OCI-LY7 (cell line): ENCODE measurements at regions of chr10 and their contacts with region 1.

Region 1: GRCh38 chr10:104121520-104122224 is at the start of gene SFR1:
- DNase-seq: peak; percentile 99
- H3K4me3 ChIP-seq: peak within 1 kb of the TSS; percentile 74
- H3K27ac ChIP-seq: peak within 1 kb of the TSS; percentile 82
- H3K4me1 ChIP-seq: peaks cover 31% of the 10 kb centered on the region
- CTCF ChIP-seq: peak; percentile 75
- total RNA-seq, gene SFR1: 6.9 and 14.8 TPM in 2 replicates

Region 2: DNA sequence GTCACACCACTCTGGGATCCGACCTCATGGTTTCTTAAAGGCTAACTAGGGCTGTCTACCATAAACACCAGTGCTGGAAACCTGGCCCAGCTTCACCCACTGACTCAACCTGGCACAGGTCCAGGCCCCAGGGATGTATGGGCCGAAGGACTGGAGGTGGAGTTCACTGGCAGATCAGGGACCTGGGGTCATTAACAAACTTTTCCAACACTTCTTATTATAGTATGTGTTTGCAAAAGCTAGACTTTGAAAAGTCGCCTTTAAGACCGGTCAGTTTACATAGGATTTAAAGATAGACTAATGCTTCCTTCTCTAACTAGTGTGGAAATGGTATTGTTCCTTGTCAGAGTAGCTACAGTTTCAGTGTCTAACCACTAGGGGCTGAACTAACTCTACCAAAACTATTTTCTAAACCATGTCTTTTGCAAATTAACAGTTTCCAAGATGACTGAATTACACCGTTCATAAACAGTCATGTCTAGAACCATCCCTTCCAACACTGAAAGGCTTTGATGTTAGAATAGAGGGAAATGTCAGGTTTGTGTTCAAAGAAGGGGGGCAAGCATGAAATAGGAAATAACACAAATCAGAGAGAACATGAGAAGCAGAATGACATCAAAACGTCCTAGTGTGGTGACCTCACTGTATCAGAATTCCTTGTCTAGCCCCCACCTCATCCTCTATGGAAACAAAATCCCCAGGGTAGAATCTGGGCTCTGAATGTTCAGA is 233.4 kb before region 1 on chr10:
- CTCF ChIA-PET with region 1: interaction called, 3 read pairs
- POLR2A ChIA-PET with region 1: interaction called, 4 read pairs
- intact Hi-C with region 1: loop called (anchors 1 kb)
- DNase-seq: peak; percentile 53
- H3K4me3 ChIP-seq: no peak overlapping the region
- H3K27ac ChIP-seq: no peak overlapping the region
- H3K4me1 ChIP-seq: no peaks in the 10 kb centered on the region
- CTCF ChIP-seq: peak; percentile 99

Region 3: GRCh38 chr10:103966671-103967447 is 154.8 kb before region 1 on chr10 and contains the start of gene SLK:
- CTCF ChIA-PET with region 1: no interaction called
- POLR2A ChIA-PET with region 1: interaction called, 8 read pairs
- intact Hi-C with region 1: loop called (anchors 1 kb)
- DNase-seq: peak; percentile 93
- H3K4me3 ChIP-seq: peak within 1 kb of the TSS; percentile 91
- H3K27ac ChIP-seq: peak within 1 kb of the TSS; percentile 49
- H3K4me1 ChIP-seq: peaks cover 30% of the 10 kb centered on the region
- CTCF ChIP-seq: no peak
- total RNA-seq, gene SLK: 19.0 and 19.9 TPM in 2 replicates

Region 4: GRCh38 chr10:104268716-104269645 is 147.3 kb after region 1 on chr10 and contains the start of gene GSTO2:
- CTCF ChIA-PET with region 1: no interaction called
- POLR2A ChIA-PET with region 1: interaction called, 13 read pairs
- intact Hi-C with region 1: loop called (anchors 5 kb)
- DNase-seq: peak; percentile 99
- H3K4me3 ChIP-seq: peak within 1 kb of the TSS; percentile 88
- H3K27ac ChIP-seq: peak within 1 kb of the TSS; percentile 47
- H3K4me1 ChIP-seq: peaks cover 16% of the 10 kb centered on the region
- CTCF ChIP-seq: no peak
- total RNA-seq, gene GSTO2: 1.6 and 8.2 TPM in 2 replicates

Region 5: DNA sequence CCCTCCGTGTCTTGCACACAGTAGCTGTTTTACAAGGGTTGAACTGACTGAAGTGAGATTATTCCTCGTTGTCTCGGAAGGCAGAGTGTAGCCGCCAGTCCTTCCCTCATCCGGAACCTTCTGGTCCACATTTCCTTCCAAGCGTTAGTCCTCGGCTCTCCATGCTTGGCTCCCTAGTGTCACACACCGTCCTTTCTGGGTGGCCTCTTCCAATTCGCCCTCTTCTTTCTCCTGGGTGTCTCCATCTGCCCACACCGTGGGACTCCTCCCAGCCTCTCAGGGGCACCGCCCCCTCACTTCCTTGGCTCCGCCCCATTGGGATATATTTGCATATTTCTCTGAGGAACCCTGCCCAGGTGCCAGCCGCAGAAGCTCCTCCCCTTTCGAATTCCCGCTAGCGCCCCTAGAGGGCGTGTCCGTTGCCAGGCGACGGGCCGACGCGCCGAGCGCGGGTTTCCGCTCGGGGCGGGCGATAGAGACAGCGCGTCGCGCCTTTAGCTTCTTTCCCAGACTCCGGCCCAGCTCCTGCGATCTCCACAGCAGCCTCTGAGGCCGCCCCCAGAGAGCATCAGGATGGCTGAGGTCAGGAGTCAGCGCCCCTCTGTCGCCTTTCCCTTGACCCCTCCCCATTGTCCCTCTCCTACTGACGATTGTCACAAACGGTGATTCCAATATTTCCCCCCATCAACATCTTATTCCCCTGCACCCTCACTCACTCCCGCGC is 231.8 kb after region 1 on chr10 and contains the start of gene CFAP58:
- CTCF ChIA-PET with region 1: no interaction called
- POLR2A ChIA-PET with region 1: no interaction called
- intact Hi-C with region 1: loop called (anchors 5 kb)
- DNase-seq: peak; percentile 87
- H3K4me3 ChIP-seq: peak within 1 kb of the TSS; percentile 68
- H3K27ac ChIP-seq: no peak within 1 kb of the TSS
- H3K4me1 ChIP-seq: peaks cover 33% of the 10 kb centered on the region
- CTCF ChIP-seq: peak; percentile 71
- total RNA-seq, gene CFAP58: 0.09 and 0.36 TPM in 2 replicates